ENCODE measurements at regions of chr17 and their contacts with region 1.

Region 1: DNA sequence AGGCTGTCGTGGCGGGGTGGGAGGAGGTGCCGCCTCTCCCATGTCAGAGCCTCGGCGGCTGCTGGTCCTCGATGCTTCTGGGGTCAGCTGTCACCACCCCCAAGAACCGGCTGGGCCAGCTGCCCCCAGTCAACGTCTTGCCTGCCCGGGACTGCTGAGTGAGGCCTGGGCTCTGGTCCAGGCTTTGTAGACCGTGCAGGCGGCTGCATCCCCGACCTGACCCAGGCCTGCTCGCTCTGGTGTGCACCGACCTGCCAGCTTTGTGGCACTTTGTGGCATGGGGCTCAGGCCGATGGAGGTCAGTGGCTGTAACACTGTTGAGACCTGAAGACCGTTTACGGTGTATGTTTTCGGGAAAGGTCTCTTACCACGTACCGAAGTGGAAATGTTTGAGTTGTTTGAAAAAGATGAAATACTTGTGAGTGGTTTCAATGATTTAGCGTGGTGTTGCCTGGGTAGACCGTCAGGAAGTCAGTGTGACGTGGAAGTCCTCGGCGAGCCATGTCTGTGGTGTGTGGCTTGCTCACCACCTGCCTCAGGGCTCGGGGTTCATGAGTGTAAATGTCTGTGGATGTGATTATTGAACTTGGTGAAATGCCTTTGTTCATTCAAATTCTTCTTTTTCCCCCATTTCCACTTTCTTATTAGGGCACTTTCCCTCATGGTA is 53.2 kb upstream of the ZNF750 start:
- DNase-seq: peak; percentile 65 to 94 (median 83)
- ATAC-seq: peak; percentile 94
- H3K4me3 ChIP-seq: no peak overlapping the region
- H3K4me3 Mint-ChIP-seq: peak overlapping the region; percentile 71
- H3K27ac ChIP-seq: peak overlapping the region; percentile 42 to 58
- H3K27ac Mint-ChIP-seq: peak overlapping the region; percentile 96
- H3K4me1 ChIP-seq: peaks cover 22% of the 10 kb centered on the region
- H3K4me1 Mint-ChIP-seq: peaks cover 33% of the 10 kb centered on the region
- H3K27me3 ChIP-seq: no peaks in the 10 kb centered on the region
- H3K27me3 Mint-ChIP-seq: no peaks in the 10 kb centered on the region
- CTCF ChIP-seq: no peak

Region 2: DNA sequence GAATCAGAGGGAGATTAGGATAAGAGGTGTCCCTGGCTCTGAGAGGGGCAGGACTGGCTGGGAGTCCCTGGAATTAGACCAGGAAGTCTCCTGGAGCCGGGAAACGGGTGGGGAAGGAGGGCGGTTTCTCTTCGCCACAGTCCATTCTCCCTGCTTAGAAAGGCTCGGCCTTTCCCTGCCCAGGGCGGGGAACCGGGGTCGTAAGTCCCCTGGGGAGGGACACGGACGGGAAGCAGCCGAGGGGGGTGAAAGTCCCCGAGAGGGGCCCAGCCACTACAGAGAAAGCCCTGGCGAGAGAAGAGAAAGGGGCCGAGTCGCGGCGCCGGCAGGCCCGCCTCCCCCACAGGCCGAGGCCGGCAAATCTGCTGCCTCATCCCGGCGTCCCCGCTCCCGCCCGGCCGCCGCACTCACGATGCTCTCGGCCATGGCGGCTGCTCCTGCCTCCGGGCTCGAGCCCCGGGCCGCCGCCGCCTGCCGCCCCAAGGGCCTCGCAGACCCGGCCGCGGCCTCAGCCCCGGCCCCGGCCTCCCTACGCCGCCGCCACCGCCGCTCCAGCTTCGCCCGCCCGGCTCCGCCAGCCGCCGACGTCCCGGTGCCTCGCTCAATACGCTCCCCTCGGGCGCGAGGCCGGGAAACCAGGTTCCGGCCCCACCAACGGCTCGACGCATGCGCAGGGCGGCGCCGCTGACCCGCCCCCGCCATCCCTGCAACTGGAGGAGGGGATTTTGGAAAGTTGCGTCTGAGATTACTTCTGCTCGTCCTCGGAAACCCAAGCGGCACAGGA is 1256.3 kb before region 1 on chr17 and contains the starts of genes NPLOC4 and TSPAN10:
- CTCF ChIA-PET with region 1: no interaction called
- POLR2A ChIA-PET with region 1: no interaction called
- intact Hi-C with region 1: no loop called
- DNase-seq: peak; percentile 66 to 93 (median 83)
- ATAC-seq: peak; percentile 96
- H3K4me3 ChIP-seq: peak within 1 kb of the TSS; percentile 85 to 90
- H3K4me3 Mint-ChIP-seq: peak within 1 kb of the TSS; percentile 90
- H3K27ac ChIP-seq: peak within 1 kb of the TSS; percentile 61 to 73
- H3K27ac Mint-ChIP-seq: peak within 1 kb of the TSS; percentile 91
- H3K4me1 ChIP-seq: peaks cover 19% of the 10 kb centered on the region
- H3K4me1 Mint-ChIP-seq: peaks cover 26% of the 10 kb centered on the region
- H3K27me3 ChIP-seq: no peaks in the 10 kb centered on the region
- H3K27me3 Mint-ChIP-seq: no peaks in the 10 kb centered on the region
- CTCF ChIP-seq: no peak
- total RNA-seq, gene NPLOC4: 55.9 to 69.6 TPM
- total RNA-seq, gene TSPAN10: 0.17 to 0.22 TPM

Region 3: GRCh38 chr17:82881900-82882714 is 10.9 kb before region 1 on chr17:
- CTCF ChIA-PET with region 1: no interaction called
- POLR2A ChIA-PET with region 1: interaction called, 5 read pairs
- intact Hi-C with region 1: loop called (anchors 1 kb)
- DNase-seq: no peak
- ATAC-seq: no peak
- H3K4me3 ChIP-seq: peak overlapping the region; percentile 14 to 70
- H3K4me3 Mint-ChIP-seq: peak overlapping the region; percentile 82
- H3K27ac ChIP-seq: peak overlapping the region; percentile 74
- H3K27ac Mint-ChIP-seq: peak overlapping the region; percentile 99
- H3K4me1 ChIP-seq: peaks cover 63% of the 10 kb centered on the region
- H3K4me1 Mint-ChIP-seq: peaks cover 71% of the 10 kb centered on the region
- H3K27me3 ChIP-seq: no peaks in the 10 kb centered on the region
- H3K27me3 Mint-ChIP-seq: no peaks in the 10 kb centered on the region
- CTCF ChIP-seq: no peak

Measured in CD8-positive, alpha-beta T cell (primary cell).